PC-3 (cell line): ENCODE measurements at regions of chr5 and their contacts with region 1.

Region 1: DNA sequence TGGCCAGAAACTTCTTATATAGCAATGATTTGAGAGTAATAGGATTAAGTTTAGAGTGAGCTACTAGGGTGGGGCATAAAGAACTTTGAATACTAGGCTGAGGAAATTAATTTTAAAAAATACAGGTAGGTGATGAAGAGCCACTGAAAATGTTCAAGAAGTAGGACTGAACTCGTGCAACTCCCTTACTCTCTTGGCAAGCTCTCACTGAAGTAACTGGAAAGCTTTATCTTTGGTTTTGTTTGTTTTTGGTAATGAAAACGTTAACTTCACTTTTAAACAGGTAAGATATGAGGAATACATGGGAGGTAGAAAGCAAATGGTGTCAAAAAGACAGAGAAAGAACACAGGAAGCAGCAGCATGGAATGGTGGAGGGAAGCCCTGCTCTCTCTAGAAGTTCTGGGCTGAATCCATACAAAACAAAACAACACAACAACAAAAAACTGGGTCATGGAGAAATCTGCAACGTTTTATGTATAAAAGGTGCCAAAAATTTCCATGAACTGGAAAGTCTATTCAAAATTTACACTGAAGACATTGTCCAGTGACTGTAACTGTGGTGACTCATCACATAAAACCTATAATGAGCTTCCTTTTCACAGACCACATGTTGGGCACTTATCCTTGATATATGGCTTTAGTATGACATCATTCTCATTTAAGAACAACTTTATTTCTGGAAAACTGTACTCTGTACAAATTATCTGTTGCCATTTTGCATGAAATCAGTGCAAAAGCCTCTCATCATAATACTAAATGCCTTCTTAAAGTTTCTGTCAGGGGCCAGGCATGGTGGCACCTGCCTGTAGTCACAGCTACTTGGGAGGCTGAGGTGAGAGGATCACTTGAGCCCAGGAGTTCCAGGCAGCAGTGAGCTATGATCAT is 91.2 kb upstream of the CHD1 start:
- DNase-seq: peak; percentile 94
- ATAC-seq: peak; percentile 95
- H3K4me3 ChIP-seq: no peak overlapping the region
- H3K27ac ChIP-seq: no peak overlapping the region
- H3K4me1 ChIP-seq: peaks cover 18% of the 10 kb centered on the region
- H3K27me3 ChIP-seq: no peaks in the 10 kb centered on the region
- CTCF ChIP-seq: no peak

Region 2: DNA sequence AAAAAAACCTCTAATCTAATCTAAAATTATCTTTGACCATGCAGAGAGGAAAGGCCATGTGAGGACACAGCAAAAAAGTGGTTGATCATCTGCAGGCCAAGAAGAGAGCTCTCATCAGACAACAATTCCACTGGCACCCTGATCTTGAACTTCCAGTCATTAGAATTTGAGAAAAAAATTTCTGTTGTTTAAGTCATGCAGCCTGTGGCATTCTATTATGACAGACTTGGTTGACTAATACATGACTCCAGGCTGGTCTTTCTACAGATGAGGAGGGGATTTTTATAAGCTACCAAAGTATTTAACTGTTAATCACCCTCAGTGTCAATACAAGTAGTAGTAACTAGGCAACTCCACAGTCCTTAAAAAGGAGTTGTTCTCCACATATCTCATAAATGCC is 605.1 kb before region 1 on chr5:
- CTCF ChIA-PET with region 1: no interaction called
- POLR2A ChIA-PET with region 1: no interaction called
- intact Hi-C with region 1: no loop called
- DNase-seq: peak; percentile 96
- ATAC-seq: peak; percentile 95
- H3K4me3 ChIP-seq: no peak overlapping the region
- H3K27ac ChIP-seq: peak overlapping the region; percentile 92
- H3K4me1 ChIP-seq: peaks cover 33% of the 10 kb centered on the region
- H3K27me3 ChIP-seq: no peaks in the 10 kb centered on the region
- CTCF ChIP-seq: no peak

Region 3: GRCh38 chr5:98997000-98997399 is 23.1 kb before region 1 on chr5:
- CTCF ChIA-PET with region 1: no interaction called
- POLR2A ChIA-PET with region 1: interaction called, 11 read pairs
- intact Hi-C with region 1: no loop called
- DNase-seq: peak; percentile 16
- ATAC-seq: no peak
- H3K4me3 ChIP-seq: no peak overlapping the region
- H3K27ac ChIP-seq: no peak overlapping the region
- H3K4me1 ChIP-seq: no peaks in the 10 kb centered on the region
- H3K27me3 ChIP-seq: no peaks in the 10 kb centered on the region
- CTCF ChIP-seq: no peak